Activated B cell treated with CpG ODN at 0.5 μM for 24 hours (primary cell): ENCODE measurements at regions of chr6 and their contacts with region 1.

Region 1: DNA sequence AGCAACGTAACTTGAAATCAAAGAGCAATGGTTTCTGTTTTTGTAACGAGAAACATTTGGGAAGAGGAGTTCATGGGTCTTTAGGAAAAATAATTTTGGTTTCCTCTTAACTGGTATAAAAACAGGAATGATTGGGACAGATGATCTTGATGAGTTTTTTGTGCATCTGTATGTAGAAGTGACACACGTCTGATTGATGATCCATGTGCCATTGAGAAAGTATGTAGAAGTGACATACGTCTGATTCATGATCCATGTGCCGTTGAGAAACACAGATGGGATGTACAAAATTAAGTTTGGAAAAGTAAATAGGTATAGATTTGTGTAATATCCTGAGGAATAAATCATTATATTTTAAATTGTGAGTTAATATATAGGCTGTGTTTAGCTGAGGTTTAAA is 2.1 kb downstream of the KIAA1586 start:
- DNase-seq: no peak
- ATAC-seq: no peak
- H3K4me3 Mint-ChIP-seq: no peak overlapping the region
- H3K27ac Mint-ChIP-seq: no peak overlapping the region
- H3K4me1 Mint-ChIP-seq: peaks cover 21% of the 10 kb centered on the region
- H3K27me3 Mint-ChIP-seq: no peaks in the 10 kb centered on the region
- CTCF ChIP-seq: no peak

Region 2: DNA sequence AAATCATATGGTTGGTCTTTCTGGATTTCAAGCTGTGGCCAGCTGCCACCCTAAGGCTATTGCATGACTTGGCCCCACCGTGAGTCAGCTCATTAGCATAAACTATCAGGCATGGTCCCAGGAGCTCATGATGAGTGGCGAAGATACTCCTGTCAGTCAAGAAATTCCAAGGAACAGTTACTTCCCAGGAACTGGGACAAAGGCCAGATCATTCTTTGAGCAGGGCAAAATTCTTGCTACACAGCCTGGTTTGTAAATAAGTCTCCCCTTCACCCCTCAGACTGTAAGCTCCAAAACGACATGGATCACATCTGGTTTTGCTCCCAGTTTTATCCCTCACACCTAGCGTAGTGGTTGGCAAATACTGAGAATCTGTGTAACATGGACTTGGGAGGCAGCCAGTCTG is 35.1 kb before region 1 on chr6:
- CTCF ChIA-PET with region 1: no interaction called
- POLR2A ChIA-PET with region 1: no interaction called
- intact Hi-C with region 1: no loop called
- DNase-seq: no peak
- ATAC-seq: no peak
- H3K4me3 Mint-ChIP-seq: no peak overlapping the region
- H3K27ac Mint-ChIP-seq: no peak overlapping the region
- H3K4me1 Mint-ChIP-seq: no peaks in the 10 kb centered on the region
- H3K27me3 Mint-ChIP-seq: peaks cover 12% of the 10 kb centered on the region
- CTCF ChIP-seq: no peak

Region 3: GRCh38 chr6:57089687-57090460 is 41.3 kb after region 1 on chr6 and contains the start of gene ZNF451:
- CTCF ChIA-PET with region 1: no interaction called
- POLR2A ChIA-PET with region 1: interaction called, 3 read pairs
- intact Hi-C with region 1: loop called (anchors 1 kb)
- DNase-seq: peak; percentile 94
- ATAC-seq: peak; percentile 92
- H3K4me3 Mint-ChIP-seq: peak within 1 kb of the TSS; percentile 86
- H3K27ac Mint-ChIP-seq: peak within 1 kb of the TSS; percentile 87
- H3K4me1 Mint-ChIP-seq: peaks cover 31% of the 10 kb centered on the region
- H3K27me3 Mint-ChIP-seq: no peaks in the 10 kb centered on the region
- CTCF ChIP-seq: no peak
- total RNA-seq, gene ZNF451: 66.9 and 71.9 TPM in 2 replicates

Region 4: GRCh38 chr6:57172136-57173055 is 123.8 kb after region 1 on chr6 and contains the start of gene BAG2:
- CTCF ChIA-PET with region 1: no interaction called
- POLR2A ChIA-PET with region 1: no interaction called
- intact Hi-C with region 1: loop called (anchors 1 kb)
- DNase-seq: peak; percentile 86
- ATAC-seq: peak; percentile 87
- H3K4me3 Mint-ChIP-seq: peak within 1 kb of the TSS; percentile 92
- H3K27ac Mint-ChIP-seq: peak within 1 kb of the TSS; percentile 92
- H3K4me1 Mint-ChIP-seq: peaks cover 26% of the 10 kb centered on the region
- H3K27me3 Mint-ChIP-seq: no peaks in the 10 kb centered on the region
- CTCF ChIP-seq: no peak
- total RNA-seq, gene BAG2: 3.9 and 4.3 TPM in 2 replicates